ENCODE measurements at regions of chr22 and their contacts with region 1.

Region 1: GRCh38 chr22:38114484-38115398 is 4.3 kb upstream of the BAIAP2L2 start:
- DNase-seq: peak; percentile 91
- CTCF ChIP-seq: peak; percentile 90

Region 2: GRCh38 chr22:38097557-38098409 is 17.0 kb before region 1 on chr22:
- CTCF ChIA-PET with region 1: interaction called, 20 read pairs
- POLR2A ChIA-PET with region 1: no interaction called
- DNase-seq: no peak
- CTCF ChIP-seq: no peak

Region 3: GRCh38 chr22:38136584-38136983 is 21.8 kb after region 1 on chr22:
- CTCF ChIA-PET with region 1: interaction called, 14 read pairs
- POLR2A ChIA-PET with region 1: no interaction called
- DNase-seq: no peak
- CTCF ChIP-seq: no peak

Region 4: DNA sequence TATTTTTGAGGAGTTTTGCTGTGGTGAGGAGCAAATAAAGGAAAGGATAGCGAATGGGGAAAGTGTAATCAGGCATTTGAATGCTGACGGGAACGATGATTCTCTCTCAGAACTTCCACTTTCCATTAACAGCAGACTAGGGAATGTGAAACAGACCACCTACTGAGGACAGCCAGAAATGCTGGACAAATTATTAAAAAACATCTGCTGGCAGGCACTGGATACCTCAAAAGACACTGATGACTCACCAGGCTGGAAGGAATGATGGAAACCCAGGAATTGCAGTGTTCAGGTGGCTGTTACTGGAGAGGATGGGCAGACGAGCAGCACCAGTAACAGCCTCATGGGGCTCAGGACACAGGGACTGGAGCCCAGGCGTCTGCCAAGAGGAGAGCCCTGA is 33.5 kb after region 1 on chr22:
- CTCF ChIA-PET with region 1: interaction called, 10 read pairs
- POLR2A ChIA-PET with region 1: no interaction called
- DNase-seq: no peak
- CTCF ChIP-seq: no peak

Region 5: GRCh38 chr22:38230108-38230825 is 115.5 kb after region 1 on chr22:
- CTCF ChIA-PET with region 1: interaction called, 20 read pairs
- POLR2A ChIA-PET with region 1: no interaction called
- DNase-seq: peak; percentile 74
- CTCF ChIP-seq: peak; percentile 43

Measured in GM10248 (cell line).